HAP-1 (cell line): ENCODE measurements at regions of chr18 and their contacts with region 1.

Region 1: DNA sequence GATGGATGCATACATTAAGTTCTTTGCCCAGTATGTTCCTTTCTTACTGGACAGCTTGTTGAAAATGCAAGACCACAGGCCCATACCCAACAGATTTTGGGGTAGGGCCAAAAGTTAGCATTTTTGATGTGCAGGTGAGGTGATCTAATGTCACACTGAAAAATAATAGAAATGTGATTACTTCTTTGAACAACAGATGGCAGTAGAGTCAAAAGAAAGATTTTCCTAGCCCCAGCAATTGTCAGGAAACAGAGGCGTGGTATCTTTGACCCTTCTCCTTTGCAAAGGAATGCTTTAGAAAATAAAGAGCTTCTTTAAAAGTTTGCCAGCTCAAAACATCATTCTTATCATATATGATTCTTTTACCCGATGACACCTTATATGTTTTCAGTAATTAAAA is 343.6 kb upstream of the SYT4 start:
- DNase-seq: peak; percentile 12 to 57
- H3K4me3 ChIP-seq: no peak overlapping the region
- H3K4me1 ChIP-seq: no peaks in the 10 kb centered on the region
- H3K27me3 ChIP-seq: no peaks in the 10 kb centered on the region; the same call in 1 of the 2 replicates

Region 2: GRCh38 chr18:44411971-44412370 is 791.0 kb after region 1 on chr18:
- in situ Hi-C with region 1: no loop called
- DNase-seq: no peak
- H3K4me3 ChIP-seq: no peak overlapping the region
- H3K4me1 ChIP-seq: no peaks in the 10 kb centered on the region
- H3K27me3 ChIP-seq: no peaks in the 10 kb centered on the region

Region 3: DNA sequence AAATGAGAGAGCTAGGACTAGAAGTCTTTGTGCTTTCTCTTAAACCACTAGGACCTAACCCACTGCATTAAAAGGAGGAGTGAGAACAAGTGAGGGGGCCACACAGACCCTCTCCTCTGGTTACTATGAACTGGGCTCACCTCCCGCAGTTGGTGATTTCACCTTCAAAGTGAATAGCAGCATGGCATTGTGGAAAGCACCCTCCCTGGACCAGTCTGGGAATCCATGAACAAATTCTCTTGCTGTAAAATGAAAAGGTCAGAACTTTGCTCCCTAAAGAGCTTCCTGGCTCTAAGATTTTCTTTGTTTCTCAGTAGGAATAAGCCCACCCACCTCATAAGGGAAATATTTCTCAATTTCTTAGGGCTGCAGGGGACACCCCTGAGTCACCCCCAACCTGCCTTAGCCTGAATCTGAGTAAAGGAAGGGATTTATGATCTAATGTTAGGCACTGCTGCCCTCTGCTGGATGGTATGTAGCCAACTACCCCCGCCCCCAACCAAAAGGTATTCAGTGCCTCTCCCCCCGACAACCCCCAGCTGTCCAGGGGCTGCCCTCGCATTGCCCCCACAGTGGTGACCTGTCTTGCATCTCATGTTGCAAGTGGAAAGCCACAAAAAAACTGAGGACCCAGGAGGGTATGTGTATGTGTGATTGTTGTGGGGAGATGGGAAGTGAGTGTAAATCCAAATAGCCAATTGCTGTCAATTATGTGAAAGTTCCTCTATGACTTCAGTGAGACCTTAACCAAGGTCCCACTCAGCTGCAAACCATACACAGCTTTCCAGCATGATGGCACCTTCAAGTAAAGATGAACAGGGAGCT is 1763.4 kb after region 1 on chr18:
- in situ Hi-C with region 1: loop called (anchors 25 kb)
- DNase-seq: peak; percentile 15 to 73
- H3K4me3 ChIP-seq: no peak overlapping the region
- H3K4me1 ChIP-seq: no peaks in the 10 kb centered on the region
- H3K27me3 ChIP-seq: no peaks in the 10 kb centered on the region